GM12878 (cell line): ENCODE measurements at regions of chr7 and their contacts with region 1.

Region 1: GRCh38 chr7:26853788-26854393 is 10.5 kb downstream of the SKAP2 start:
- DNase-seq: no peak
- ATAC-seq: no peak
- H3K4me3 ChIP-seq: no peak overlapping the region
- H3K27ac ChIP-seq: no peak overlapping the region
- H3K4me1 ChIP-seq: 0 out of 2 replicates have a peak, but pooled peaks cover 5% of the 10 kb centered on the region
- H3K27me3 ChIP-seq: no peaks in the 10 kb centered on the region
- CTCF ChIP-seq: peak; percentile 27 to 42 (median 31); a peak in 4 of 6 replicates
- EP300 ChIP-seq: no peak
- POLR2A ChIP-seq: no peak
- RAD21 ChIP-seq: peak; percentile 50

Region 2: DNA sequence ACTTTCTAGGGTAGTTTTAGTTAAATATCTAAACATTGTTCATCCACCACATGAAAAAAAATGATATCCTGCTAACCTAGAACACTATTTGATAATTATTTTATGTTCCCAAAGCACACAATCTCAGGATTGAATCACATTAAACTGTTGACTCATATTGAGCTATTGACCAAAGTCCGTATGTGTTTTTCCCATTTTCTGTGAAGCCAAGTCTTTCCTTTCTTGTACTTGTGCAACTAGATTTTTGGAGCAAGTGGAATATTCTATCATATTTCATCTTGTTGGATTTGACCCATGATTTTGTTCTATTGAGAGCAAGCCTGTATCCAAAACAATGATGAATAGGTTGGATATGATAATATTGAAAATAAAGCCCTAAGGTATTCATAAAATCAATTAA is 154.1 kb before region 1 on chr7:
- CTCF ChIA-PET with region 1: no interaction called
- POLR2A ChIA-PET with region 1: no interaction called
- RAD21 ChIA-PET with region 1: no interaction called
- SMC1A ChIA-PET with region 1: no interaction called
- in situ Hi-C with region 1: no loop called
- intact Hi-C with region 1: no loop called
- DNase-seq: no peak
- ATAC-seq: no peak
- H3K4me3 ChIP-seq: no peak overlapping the region
- H3K27ac ChIP-seq: no peak overlapping the region
- H3K4me1 ChIP-seq: no peaks in the 10 kb centered on the region
- H3K27me3 ChIP-seq: no peaks in the 10 kb centered on the region
- CTCF ChIP-seq: no peak
- EP300 ChIP-seq: no peak
- POLR2A ChIP-seq: no peak
- RAD21 ChIP-seq: no peak

Region 3: GRCh38 chr7:27150568-27151340 is 296.9 kb after region 1 on chr7:
- CTCF ChIA-PET with region 1: interaction called, 38 read pairs
- POLR2A ChIA-PET with region 1: no interaction called
- RAD21 ChIA-PET with region 1: interaction called, 3 read pairs
- SMC1A ChIA-PET with region 1: interaction called, 17 read pairs
- in situ Hi-C with region 1: no loop called
- intact Hi-C with region 1: no loop called
- DNase-seq: no peak
- ATAC-seq: peak; percentile 96
- H3K4me3 ChIP-seq: peak overlapping the region; percentile 67
- H3K27ac ChIP-seq: no peak overlapping the region
- H3K4me1 ChIP-seq: no peaks in the 10 kb centered on the region; the same call in 1 of the 2 replicates
- H3K27me3 ChIP-seq: peaks cover 20 to 60% of the 10 kb centered on the region in 2 experiments
- CTCF ChIP-seq: peak; percentile 70 to 84 (median 74)
- EP300 ChIP-seq: no peak
- POLR2A ChIP-seq: no peak; the same call in 1 of the 2 replicates
- RAD21 ChIP-seq: peak; percentile 30; the same call in 1 of the 2 replicates